ENCODE measurements at regions of chr2 and their contacts with region 1.

Region 1: GRCh38 chr2:209423562-209424198 is at the start of gene MAP2:
- DNase-seq: no peak
- ATAC-seq: peak; percentile 97
- H3K4me3 ChIP-seq: peak within 1 kb of the TSS; percentile 86 to 90
- H3K27ac ChIP-seq: peak within 1 kb of the TSS; percentile 81
- H3K4me1 ChIP-seq: peaks cover 10% of the 10 kb centered on the region
- H3K27me3 ChIP-seq: no peaks in the 10 kb centered on the region
- CTCF ChIP-seq: peak; percentile 99
- total RNA-seq, gene MAP2: 44.9 TPM

Region 2: GRCh38 chr2:208142240-208142924 is 1281.3 kb before region 1 on chr2:
- CTCF ChIA-PET with region 1: no interaction called
- POLR2A ChIA-PET with region 1: interaction called, 11 read pairs
- in situ Hi-C with region 1: no loop called
- intact Hi-C with region 1: no loop called
- DNase-seq: no peak
- ATAC-seq: no peak
- H3K4me3 ChIP-seq: no peak overlapping the region
- H3K27ac ChIP-seq: no peak overlapping the region
- H3K4me1 ChIP-seq: no peaks in the 10 kb centered on the region
- H3K27me3 ChIP-seq: no peaks in the 10 kb centered on the region
- CTCF ChIP-seq: no peak

Region 3: GRCh38 chr2:209049608-209050007 is 374.1 kb before region 1 on chr2:
- CTCF ChIA-PET with region 1: no interaction called
- POLR2A ChIA-PET with region 1: no interaction called
- in situ Hi-C with region 1: no loop called
- intact Hi-C with region 1: no loop called
- DNase-seq: no peak
- ATAC-seq: no peak
- H3K4me3 ChIP-seq: no peak overlapping the region
- H3K27ac ChIP-seq: no peak overlapping the region
- H3K4me1 ChIP-seq: no peaks in the 10 kb centered on the region
- H3K27me3 ChIP-seq: no peaks in the 10 kb centered on the region
- CTCF ChIP-seq: no peak

Region 4: DNA sequence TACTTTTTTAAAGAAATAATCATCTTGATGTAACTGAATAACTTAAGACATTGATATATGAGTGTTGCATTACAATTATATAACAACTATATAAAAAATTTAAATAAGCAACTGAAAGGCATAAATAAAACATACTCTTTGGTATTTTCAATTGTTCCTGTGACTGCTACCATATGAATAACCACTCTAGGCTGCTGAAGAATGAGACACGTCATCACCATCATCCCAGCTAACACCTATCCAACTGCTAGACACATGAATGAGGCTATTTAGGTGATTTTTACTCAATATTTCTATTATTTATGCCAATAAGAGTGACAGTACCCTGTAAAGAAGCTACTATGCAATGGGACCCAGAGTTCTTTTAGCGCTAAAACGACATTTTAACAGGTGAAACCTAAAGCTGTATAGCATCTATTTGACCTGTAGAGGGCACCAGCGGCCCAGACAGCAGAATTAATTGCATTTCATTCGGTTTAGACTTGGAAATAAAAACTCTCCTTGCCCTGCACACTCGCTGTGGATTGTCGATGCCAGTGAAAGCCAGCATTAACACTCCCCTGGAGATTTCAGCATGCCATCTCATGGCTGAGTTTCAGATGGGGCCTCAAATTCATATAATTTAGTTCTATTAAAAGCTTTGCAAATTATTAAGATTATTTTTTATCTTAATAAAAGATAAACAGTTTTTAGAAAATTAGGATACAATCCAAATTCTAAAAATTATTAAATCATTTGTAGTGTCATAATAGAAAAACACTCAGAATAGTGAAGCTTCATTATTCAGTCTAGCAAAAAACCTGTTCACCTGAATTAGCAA is 89.3 kb before region 1 on chr2:
- CTCF ChIA-PET with region 1: interaction called, 8 read pairs
- POLR2A ChIA-PET with region 1: no interaction called
- in situ Hi-C with region 1: no loop called
- intact Hi-C with region 1: loop called (anchors 2 kb)
- DNase-seq: peak; percentile 43
- ATAC-seq: peak; percentile 95
- H3K4me3 ChIP-seq: no peak overlapping the region
- H3K27ac ChIP-seq: peak overlapping the region; percentile 18; the same call in 1 of the 2 replicates
- H3K4me1 ChIP-seq: 0 out of 2 replicates have a peak, but pooled peaks cover 6% of the 10 kb centered on the region
- H3K27me3 ChIP-seq: no peaks in the 10 kb centered on the region
- CTCF ChIP-seq: peak; percentile 94

Region 5: GRCh38 chr2:209556354-209556961 is 132.8 kb after region 1 on chr2:
- CTCF ChIA-PET with region 1: interaction called, 10 read pairs
- POLR2A ChIA-PET with region 1: no interaction called
- in situ Hi-C with region 1: no loop called
- intact Hi-C with region 1: loop called (anchors 1 kb)
- DNase-seq: peak; percentile 18
- ATAC-seq: peak; percentile 89
- H3K4me3 ChIP-seq: no peak overlapping the region
- H3K27ac ChIP-seq: no peak overlapping the region
- H3K4me1 ChIP-seq: no peaks in the 10 kb centered on the region
- H3K27me3 ChIP-seq: no peaks in the 10 kb centered on the region
- CTCF ChIP-seq: peak; percentile 67

Region 6: DNA sequence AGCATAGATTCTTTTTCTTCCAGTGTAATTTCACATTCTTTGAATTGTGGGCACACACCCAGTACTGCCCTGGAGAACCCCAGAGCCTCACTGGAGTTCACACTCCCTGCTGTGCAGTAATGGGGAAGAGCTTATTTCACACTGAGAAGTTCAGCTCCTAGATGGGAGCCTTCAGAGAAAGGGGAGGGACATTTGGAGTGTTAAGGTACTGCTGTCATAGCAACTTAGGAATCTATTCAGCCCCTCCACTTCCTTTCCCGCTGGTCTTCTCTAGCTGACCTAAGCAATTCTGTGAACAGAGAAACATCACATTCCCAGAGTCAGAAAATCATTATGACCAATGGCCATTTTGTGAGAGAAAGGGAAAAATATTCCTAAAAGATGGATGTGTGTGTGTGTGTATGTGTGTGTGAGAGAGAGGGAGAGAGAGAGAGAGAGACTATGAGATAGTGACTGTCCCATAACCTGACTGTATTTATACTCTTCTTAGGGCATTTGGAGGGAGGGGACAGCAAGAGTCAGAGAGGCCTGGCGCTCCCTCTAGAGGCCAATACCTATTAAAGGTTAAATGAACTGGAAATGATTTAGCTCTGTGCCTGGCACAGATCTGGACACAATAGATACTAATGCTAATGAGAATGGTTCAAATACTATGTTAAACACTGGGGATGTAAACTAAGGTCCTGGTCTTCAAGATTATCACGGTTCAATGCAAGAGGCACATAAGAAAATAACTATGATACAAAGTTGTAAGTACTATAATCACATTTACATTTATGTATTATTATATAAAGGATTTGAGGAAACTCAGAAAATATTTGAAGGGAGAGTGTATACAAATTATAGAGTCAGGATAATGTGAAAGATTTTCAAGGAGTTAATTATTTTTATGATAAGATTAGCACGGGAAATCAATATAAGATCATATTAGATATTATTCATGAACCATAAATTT is 537.3 kb after region 1 on chr2:
- CTCF ChIA-PET with region 1: interaction called, 4 read pairs
- POLR2A ChIA-PET with region 1: no interaction called
- in situ Hi-C with region 1: no loop called
- intact Hi-C with region 1: loop called (anchors 10 kb)
- DNase-seq: no peak
- ATAC-seq: peak; percentile 84
- H3K4me3 ChIP-seq: no peak overlapping the region
- H3K27ac ChIP-seq: no peak overlapping the region
- H3K4me1 ChIP-seq: no peaks in the 10 kb centered on the region; the same call in 1 of the 2 replicates
- H3K27me3 ChIP-seq: peaks cover 2% of the 10 kb centered on the region; the same call in 1 of the 2 replicates
- CTCF ChIP-seq: peak; percentile 78